GM18951 (cell line): ENCODE measurements at regions of chrX and their contacts with region 1.

Region 1: DNA sequence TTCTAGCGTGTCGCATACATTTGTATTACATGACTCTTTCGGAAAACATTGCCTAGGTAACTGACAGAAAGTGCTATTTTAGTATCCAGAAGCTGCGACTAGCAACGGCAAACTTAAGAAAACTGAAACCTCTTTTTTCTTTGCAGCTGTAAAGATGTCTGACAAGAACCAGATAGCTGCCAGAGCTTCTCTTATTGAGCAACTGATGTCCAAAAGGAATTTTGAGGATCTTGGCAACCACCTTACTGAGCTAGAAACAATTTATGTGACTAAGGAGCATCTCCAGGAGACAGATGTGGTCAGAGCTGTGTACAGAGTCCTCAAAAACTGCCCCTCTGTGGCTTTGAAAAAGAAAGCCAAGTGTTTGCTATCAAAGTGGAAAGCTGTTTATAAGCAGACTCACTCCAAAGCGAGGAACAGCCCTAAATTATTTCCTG is 9.4 kb downstream of the TCEANC start:
- POLR2A ChIP-seq: no peak

Region 2: DNA sequence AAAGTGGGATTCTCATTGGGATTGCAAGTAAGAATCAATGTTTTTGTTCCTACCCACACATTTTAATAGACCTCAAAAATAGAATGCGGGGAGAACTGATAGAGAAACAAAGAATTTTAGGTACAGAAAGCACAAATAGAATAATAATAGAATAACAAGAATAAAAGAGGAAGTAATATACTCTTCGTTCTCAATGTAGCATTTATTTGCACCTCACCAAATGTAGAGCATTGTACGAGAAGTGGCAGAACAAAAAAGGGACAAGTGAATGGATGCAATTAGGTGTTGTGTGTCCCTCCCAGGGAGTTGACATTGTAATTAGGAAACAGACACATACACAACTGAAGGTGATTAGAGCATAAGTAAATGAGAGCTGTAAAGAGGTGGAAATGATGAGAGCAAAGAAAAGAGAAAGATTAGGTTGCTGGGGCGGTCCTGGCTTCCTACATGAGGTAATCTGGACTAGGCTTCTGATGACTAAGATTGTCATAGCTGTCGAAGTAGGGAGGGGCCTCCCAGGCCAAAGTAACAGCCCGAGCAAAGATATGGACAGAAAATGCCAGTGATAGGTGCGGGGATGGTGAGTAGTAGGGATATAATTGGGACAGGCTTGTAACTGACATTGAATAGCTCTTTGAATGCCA is 36.9 kb after region 1 on chrX:
- in situ Hi-C with region 1: loop called (anchors 5 kb)
- POLR2A ChIP-seq: no peak

Region 3: GRCh38 chrX:13747836-13748235 is 85.5 kb after region 1 on chrX:
- in situ Hi-C with region 1: loop called (anchors 5 kb)
- POLR2A ChIP-seq: no peak